Thyroid gland (tissue), 4 donors: ENCODE measurements at regions of chr3 and their contacts with region 1.

Region 1: GRCh38 chr3:16048435-16049318 is 125.8 kb upstream of the GALNT15 start:
- DNase-seq: peak; percentile 34 to 50
- H3K4me3 ChIP-seq: no peak overlapping the region
- H3K27ac ChIP-seq: no peak overlapping the region
- H3K4me1 ChIP-seq: peaks cover 5 to 13% of the 10 kb centered on the region in 2 donors
- H3K27me3 ChIP-seq: no peaks in the 10 kb centered on the region
- CTCF ChIP-seq: peak; percentile 33 to 83 (median 75)
- POLR2A ChIP-seq: no peak

Region 2: GRCh38 chr3:16177962-16178627 is 129.4 kb after region 1 on chr3:
- intact Hi-C with region 1: loop called (anchors 2 kb)
- DNase-seq: peak; percentile 74 to 81
- H3K4me3 ChIP-seq: peak overlapping the region in 1 of 3 donors; percentile 27
- H3K27ac ChIP-seq: peak overlapping the region in 1 of 3 donors; percentile 30
- H3K4me1 ChIP-seq: peaks cover 4 to 16% of the 10 kb centered on the region in 2 donors
- H3K27me3 ChIP-seq: no peaks in the 10 kb centered on the region
- CTCF ChIP-seq: peak; percentile 75 to 96 (median 92)
- POLR2A ChIP-seq: peak in 1 of 2 donors; percentile 10

Region 3: DNA sequence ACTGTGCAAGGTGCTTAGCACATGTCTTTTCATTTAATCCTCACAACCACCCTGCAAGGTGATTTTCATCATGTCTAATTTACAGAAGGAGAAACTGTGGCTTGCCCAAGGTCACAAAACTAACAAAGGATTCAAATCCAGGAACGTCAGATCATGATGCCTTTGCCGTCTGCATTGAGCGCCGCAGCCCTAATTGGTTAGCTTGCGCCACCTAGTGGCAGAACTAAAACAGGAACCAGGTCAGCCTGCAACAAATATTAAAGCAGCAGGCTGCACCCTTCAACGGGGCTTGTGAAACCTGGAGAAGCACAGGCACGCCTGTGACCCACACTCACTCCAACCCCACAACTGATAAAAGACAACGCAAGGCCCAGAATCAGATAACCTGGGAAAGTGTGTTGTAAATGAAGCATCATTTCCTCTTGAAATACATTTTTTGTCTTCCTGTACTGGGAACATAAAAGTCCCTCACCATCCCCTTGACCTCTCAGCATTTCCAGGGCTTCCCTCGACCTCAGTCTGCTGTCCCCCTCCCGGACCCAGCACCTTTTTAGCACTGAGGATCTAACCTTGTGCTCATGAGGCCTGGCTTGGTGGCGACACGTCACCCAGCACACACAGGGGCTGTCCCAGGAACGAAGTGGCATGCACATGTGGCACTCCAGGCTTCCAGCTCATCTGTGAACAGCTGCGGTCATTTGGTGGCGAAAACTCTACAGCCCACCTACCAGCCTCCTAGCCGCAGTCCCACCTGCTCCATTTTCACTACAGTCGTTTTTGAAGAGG is 198.8 kb after region 1 on chr3:
- intact Hi-C with region 1: loop called (anchors 5 kb)
- DNase-seq: peak; percentile 74 to 82
- H3K4me3 ChIP-seq: no peak overlapping the region
- H3K27ac ChIP-seq: no peak overlapping the region
- H3K4me1 ChIP-seq: peaks cover 0 to 6% of the 10 kb centered on the region in 2 donors
- H3K27me3 ChIP-seq: no peaks in the 10 kb centered on the region
- CTCF ChIP-seq: peak; percentile 75 to 89 (median 84)
- POLR2A ChIP-seq: no peak